Ascending aorta (tissue), 2 donors: ENCODE measurements at regions of chr12 and their contacts with region 1.

Region 1: DNA sequence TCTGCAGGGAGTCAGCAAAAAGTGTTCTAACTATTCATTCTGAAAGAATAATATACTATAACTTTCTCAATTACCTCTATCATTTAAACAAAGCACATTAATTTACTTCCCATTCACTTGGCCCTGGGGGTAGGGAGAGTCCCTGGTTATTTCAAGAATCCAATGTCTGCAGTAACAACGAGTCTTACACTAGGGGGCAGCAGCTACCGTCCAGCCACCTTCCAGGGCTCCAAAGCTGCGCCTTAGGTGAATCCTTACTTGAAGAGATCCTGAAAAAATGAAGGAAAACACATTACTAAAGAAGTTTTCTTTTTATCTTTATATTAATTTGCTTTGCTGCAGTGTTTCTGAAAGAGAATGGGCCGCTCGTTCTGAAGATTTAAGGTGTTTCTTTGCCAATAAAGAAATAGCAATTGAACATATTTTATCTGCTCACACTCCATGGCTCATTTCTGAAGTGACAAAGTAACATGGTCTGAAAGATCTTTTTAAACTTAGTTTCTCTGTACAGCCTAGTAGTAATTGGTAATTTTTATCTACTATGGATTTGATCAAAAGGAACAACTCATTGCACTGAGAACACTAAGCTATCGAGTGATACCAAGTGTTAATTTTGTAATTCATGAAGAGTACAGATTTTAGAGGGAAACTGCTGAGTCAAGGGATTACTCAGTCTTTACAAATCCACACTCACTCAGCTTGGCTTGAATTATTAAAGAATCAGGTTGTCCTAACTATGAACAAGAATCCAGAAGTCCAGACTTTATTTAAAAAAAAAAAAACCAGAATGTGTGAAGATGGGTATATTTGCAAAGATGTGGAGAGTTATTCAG is 27.6 kb downstream of the BHLHE41 start:
- DNase-seq: peak in 1 of 2 donors; percentile 77
- H3K4me3 ChIP-seq: no peak overlapping the region
- H3K27ac ChIP-seq: no peak overlapping the region
- H3K4me1 ChIP-seq: no peaks in the 10 kb centered on the region
- H3K27me3 ChIP-seq: no peaks in the 10 kb centered on the region
- CTCF ChIP-seq: peak; percentile 87 to 95 (median 93)

Region 2: GRCh38 chr12:26068503-26068902 is 28.8 kb before region 1 on chr12:
- intact Hi-C with region 1: no loop called
- DNase-seq: no peak
- H3K4me3 ChIP-seq: no peak overlapping the region
- H3K27ac ChIP-seq: no peak overlapping the region
- H3K4me1 ChIP-seq: no peaks in the 10 kb centered on the region
- H3K27me3 ChIP-seq: no peaks in the 10 kb centered on the region
- CTCF ChIP-seq: no peak

Region 3: GRCh38 chr12:26651566-26652188 is 554.4 kb after region 1 on chr12:
- intact Hi-C with region 1: loop called (anchors 1 kb)
- DNase-seq: no peak
- H3K4me3 ChIP-seq: no peak overlapping the region
- H3K27ac ChIP-seq: no peak overlapping the region
- H3K4me1 ChIP-seq: peaks cover 0 to 5% of the 10 kb centered on the region in 2 donors
- H3K27me3 ChIP-seq: no peaks in the 10 kb centered on the region
- CTCF ChIP-seq: peak; percentile 37 to 63 (median 62)

Region 4: DNA sequence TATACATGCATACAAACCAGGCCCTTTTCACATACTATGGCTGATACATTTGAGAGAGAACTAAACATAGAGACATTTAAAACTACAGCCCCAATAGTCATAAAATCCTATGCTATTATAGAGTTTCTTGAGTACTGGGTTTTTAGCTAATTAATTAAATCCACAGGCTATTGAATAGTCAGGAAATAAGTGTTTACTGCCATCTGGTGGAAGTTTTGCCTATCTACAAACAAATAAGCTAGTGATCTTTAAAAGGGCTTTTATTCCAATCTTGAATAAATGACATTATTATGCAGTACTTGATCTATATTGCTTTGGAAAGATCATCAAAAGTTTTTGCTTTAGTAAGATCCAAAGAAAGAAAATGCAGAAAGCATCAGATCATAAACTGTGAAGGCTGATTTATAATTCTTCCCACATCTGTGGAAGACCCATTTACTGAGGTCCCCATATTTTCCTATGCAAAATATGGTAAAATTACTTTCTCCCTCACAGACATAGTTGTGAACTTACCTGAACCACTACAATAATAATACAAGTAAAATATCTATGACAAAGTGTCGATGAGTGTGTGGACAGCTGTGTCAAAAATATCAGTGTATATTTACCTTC is 604.4 kb after region 1 on chr12:
- intact Hi-C with region 1: loop called (anchors 1 kb)
- DNase-seq: no peak
- H3K4me3 ChIP-seq: no peak overlapping the region
- H3K27ac ChIP-seq: no peak overlapping the region
- H3K4me1 ChIP-seq: peaks cover 0 to 11% of the 10 kb centered on the region in 2 donors
- H3K27me3 ChIP-seq: no peaks in the 10 kb centered on the region
- CTCF ChIP-seq: peak; percentile 44 to 59 (median 45)